GM12878 (cell line): ENCODE measurements at regions of chr4 and their contacts with region 1.

Region 1: GRCh38 chr4:186201535-186202230 is 10.3 kb downstream of the CYP4V2 start:
- DNase-seq: no peak
- ATAC-seq: peak; percentile 100
- H3K4me3 ChIP-seq: no peak overlapping the region
- H3K27ac ChIP-seq: no peak overlapping the region
- H3K4me1 ChIP-seq: no peaks in the 10 kb centered on the region
- H3K27me3 ChIP-seq: no peaks in the 10 kb centered on the region
- CTCF ChIP-seq: peak; percentile 84 to 97 (median 96)
- EP300 ChIP-seq: no peak
- POLR2A ChIP-seq: no peak
- RAD21 ChIP-seq: peak; percentile 50

Region 2: DNA sequence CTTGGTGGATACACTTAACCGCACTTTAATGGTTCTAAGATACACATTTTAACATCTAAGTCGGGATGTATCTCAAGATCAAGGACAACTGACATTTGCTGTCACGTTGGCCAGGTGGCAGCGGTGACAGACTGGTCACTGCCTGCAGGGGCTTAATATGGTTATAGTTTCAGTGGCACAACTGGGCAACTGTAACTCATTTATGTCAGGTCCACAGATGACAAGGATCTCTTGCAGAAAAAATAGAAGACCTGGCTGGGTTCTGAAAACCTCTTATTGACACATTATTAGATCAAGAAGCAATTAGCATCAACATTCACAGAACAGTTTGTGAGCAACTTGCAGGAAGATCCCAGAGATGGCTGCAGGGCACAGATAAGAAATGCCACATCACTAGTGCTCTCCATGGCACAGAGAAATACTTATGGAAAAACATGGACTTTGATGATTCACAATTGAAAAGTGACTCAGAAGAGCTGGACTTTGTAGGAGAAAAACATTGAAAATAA is 290.1 kb before region 1 on chr4:
- CTCF ChIA-PET with region 1: no interaction called
- POLR2A ChIA-PET with region 1: no interaction called
- RAD21 ChIA-PET with region 1: no interaction called
- SMC1A ChIA-PET with region 1: no interaction called
- in situ Hi-C with region 1: no loop called
- intact Hi-C with region 1: no loop called
- DNase-seq: no peak
- ATAC-seq: no peak
- H3K4me3 ChIP-seq: no peak overlapping the region
- H3K27ac ChIP-seq: no peak overlapping the region
- H3K4me1 ChIP-seq: no peaks in the 10 kb centered on the region
- H3K27me3 ChIP-seq: no peaks in the 10 kb centered on the region
- CTCF ChIP-seq: no peak
- EP300 ChIP-seq: no peak
- POLR2A ChIP-seq: no peak
- RAD21 ChIP-seq: no peak

Region 3: DNA sequence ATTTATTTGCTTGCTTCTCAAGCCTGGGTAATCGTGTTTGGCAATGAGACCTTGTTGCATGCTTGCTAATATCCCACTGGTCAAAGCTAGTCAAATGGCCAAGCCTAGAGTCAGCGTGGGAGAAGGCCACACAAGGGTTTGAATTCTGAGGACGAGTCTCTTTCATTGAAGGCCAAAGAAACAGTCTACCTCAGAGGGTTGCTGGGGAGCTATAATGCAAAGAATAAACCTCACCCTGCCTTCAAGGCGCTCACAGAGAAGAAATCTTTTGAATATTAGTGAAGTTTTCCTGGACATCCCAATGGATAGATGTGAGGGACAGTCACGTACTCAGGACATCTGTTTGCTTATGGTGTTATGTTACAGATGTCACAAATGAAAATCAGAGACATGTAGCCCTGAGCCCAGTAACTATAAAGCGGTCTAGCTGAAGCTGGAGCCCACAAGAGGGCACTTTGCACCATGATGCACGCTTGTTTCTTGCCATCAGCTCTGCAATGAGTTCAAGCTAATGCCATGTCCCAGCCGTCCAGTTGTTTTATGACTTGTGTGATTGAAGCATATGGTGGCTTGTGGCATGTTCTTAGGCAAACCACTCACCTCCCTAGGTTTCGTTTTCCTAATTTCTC is 133.8 kb before region 1 on chr4:
- CTCF ChIA-PET with region 1: interaction called, 5 read pairs
- POLR2A ChIA-PET with region 1: no interaction called
- RAD21 ChIA-PET with region 1: no interaction called
- SMC1A ChIA-PET with region 1: no interaction called
- in situ Hi-C with region 1: no loop called
- intact Hi-C with region 1: loop called (anchors 2 kb)
- DNase-seq: peak; percentile 25
- ATAC-seq: peak; percentile 94
- H3K4me3 ChIP-seq: no peak overlapping the region
- H3K27ac ChIP-seq: no peak overlapping the region
- H3K4me1 ChIP-seq: no peaks in the 10 kb centered on the region
- H3K27me3 ChIP-seq: peaks cover 0 to 3% of the 10 kb centered on the region in 2 experiments; a peak in 2 of 4 replicates
- CTCF ChIP-seq: peak; percentile 54 to 55 (median 55); a peak in 5 of 6 replicates
- EP300 ChIP-seq: no peak
- POLR2A ChIP-seq: no peak
- RAD21 ChIP-seq: peak; percentile 60

Region 4: GRCh38 chr4:186121057-186121456 is 80.6 kb before region 1 on chr4:
- CTCF ChIA-PET with region 1: no interaction called
- POLR2A ChIA-PET with region 1: no interaction called
- RAD21 ChIA-PET with region 1: no interaction called
- SMC1A ChIA-PET with region 1: no interaction called
- in situ Hi-C with region 1: no loop called
- intact Hi-C with region 1: no loop called
- DNase-seq: no peak
- ATAC-seq: no peak
- H3K4me3 ChIP-seq: no peak overlapping the region
- H3K27ac ChIP-seq: no peak overlapping the region
- H3K4me1 ChIP-seq: no peaks in the 10 kb centered on the region
- H3K27me3 ChIP-seq: no peaks in the 10 kb centered on the region; a peak in 1 of 4 replicates
- CTCF ChIP-seq: no peak
- EP300 ChIP-seq: no peak
- POLR2A ChIP-seq: no peak
- RAD21 ChIP-seq: no peak

Region 5: DNA sequence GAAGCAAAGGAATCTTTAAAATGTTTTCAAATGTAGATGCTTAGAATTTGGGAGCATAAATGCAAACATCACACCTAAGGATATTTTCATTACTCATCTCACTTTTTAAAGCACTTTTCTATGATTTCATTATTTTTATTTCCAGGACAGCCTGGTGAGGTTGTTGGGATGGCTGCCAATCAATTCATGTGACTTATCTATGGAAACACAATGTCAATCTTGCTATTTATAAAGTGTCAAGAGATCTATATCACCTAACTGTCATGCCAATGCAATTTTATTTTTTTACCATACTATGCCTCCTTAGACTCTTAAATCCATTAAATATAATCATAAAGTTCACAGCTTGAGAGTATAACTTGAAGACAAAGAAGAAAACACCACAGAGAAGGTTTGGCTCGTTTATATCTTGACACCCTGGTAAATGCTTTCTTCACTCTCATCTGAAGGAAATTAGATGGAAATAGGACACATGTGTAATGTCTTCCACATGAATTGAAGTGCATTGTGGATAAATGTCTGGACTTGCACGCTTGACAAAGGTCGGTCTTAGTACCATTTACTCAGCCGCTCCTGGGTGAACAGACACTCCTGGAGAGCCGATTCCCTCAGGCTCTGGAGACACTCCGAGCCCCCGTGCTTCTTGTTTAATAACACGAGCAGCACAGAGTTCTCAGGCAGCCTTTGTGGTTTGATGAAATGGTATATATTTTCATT is 947.7 kb after region 1 on chr4:
- CTCF ChIA-PET with region 1: no interaction called
- POLR2A ChIA-PET with region 1: no interaction called
- RAD21 ChIA-PET with region 1: no interaction called
- SMC1A ChIA-PET with region 1: no interaction called
- in situ Hi-C with region 1: no loop called
- intact Hi-C with region 1: no loop called
- DNase-seq: no peak
- ATAC-seq: no peak
- H3K4me3 ChIP-seq: no peak overlapping the region
- H3K27ac ChIP-seq: no peak overlapping the region
- H3K4me1 ChIP-seq: no peaks in the 10 kb centered on the region
- H3K27me3 ChIP-seq: no peaks in the 10 kb centered on the region
- CTCF ChIP-seq: no peak
- EP300 ChIP-seq: no peak
- POLR2A ChIP-seq: no peak
- RAD21 ChIP-seq: no peak